Mammary epithelial cell (primary cell): ENCODE measurements at regions of chr11 and their contacts with region 1.

Region 1: GRCh38 chr11:126318574-126319373 is 14.9 kb downstream of the DCPS start:
- DNase-seq: peak; percentile 96
- H3K4me3 ChIP-seq: peak overlapping the region; percentile 2 to 43 (median 26)
- H3K27ac ChIP-seq: peak overlapping the region; percentile 80
- H3K4me1 ChIP-seq: peaks cover 32% of the 10 kb centered on the region
- H3K27me3 ChIP-seq: no peaks in the 10 kb centered on the region
- CTCF ChIP-seq: no peak

Region 2: DNA sequence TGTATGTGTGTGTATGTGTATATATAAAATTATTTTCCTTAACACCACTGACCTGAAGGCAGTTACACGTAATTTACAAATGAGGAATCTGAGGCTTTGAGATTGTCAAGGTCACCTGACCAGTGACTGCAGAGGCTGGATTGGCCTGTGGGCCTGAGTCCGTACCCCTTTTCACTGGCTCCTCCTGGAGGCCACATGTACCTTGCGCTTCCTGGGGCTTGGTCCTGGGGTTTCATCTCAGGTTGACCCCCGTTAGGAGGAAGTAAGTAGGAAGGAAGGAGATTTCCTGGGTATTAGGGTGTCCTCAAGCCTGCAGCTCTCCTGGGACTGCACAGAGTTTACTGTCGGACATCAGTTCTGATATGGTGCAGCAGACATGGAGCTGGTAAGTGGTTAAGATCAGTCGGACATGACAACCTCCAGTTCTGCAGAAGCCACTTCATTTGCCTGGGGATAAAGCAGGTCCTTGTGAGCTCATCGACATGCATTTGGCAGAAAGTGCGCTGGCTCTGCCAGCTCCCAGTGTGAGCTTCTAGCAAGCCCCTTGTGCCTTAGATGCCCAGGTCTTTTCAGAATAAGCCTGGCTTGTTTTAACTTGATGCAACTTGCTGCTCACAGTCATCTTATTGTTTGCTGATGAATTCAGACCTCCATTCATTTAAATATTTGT is 73.3 kb after region 1 on chr11:
- CTCF ChIA-PET with region 1: interaction called, 4 read pairs
- dilution Hi-C with region 1: loop called (anchors 5 kb)
- in situ Hi-C with region 1: no loop called
- intact Hi-C with region 1: loop called (anchors 2 kb)
- DNase-seq: peak; percentile 73
- H3K4me3 ChIP-seq: no peak overlapping the region
- H3K27ac ChIP-seq: no peak overlapping the region
- H3K4me1 ChIP-seq: peaks cover 39% of the 10 kb centered on the region
- H3K27me3 ChIP-seq: no peaks in the 10 kb centered on the region
- CTCF ChIP-seq: no peak

Region 3: GRCh38 chr11:126416542-126417090 is 97.8 kb after region 1 on chr11:
- CTCF ChIA-PET with region 1: no interaction called
- dilution Hi-C with region 1: loop called (anchors 5 kb)
- in situ Hi-C with region 1: loop called in 1 of 2 experiments (anchors 25 kb)
- intact Hi-C with region 1: no loop called
- DNase-seq: no peak
- H3K4me3 ChIP-seq: peak overlapping the region in 1 of 3 experiments; percentile 12
- H3K27ac ChIP-seq: peak overlapping the region; percentile 7
- H3K4me1 ChIP-seq: peaks cover 11% of the 10 kb centered on the region
- H3K27me3 ChIP-seq: no peaks in the 10 kb centered on the region
- CTCF ChIP-seq: no peak

Region 4: DNA sequence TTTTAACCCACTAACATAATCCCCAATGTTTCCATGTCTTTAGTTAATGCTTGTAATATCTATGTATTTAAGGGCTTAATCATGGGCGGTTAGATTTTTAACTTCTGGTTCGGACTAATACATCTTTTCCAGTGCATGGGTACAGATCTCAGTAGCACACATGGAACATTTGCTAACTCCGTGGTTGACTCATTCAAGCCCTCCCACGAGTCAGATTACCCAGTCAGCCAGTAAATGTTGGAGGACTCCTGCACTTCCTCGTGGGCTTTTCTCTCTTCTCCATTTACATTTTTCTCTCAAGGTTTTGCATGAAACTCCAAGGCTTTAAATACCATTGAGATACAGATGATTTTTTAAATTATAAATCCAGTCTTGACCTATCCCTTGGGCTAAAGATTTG is 350.6 kb after region 1 on chr11:
- CTCF ChIA-PET with region 1: no interaction called
- dilution Hi-C with region 1: no loop called
- in situ Hi-C with region 1: no loop called
- intact Hi-C with region 1: no loop called
- DNase-seq: no peak
- H3K4me3 ChIP-seq: no peak overlapping the region
- H3K27ac ChIP-seq: no peak overlapping the region
- H3K4me1 ChIP-seq: no peaks in the 10 kb centered on the region
- H3K27me3 ChIP-seq: peaks cover 5% of the 10 kb centered on the region
- CTCF ChIP-seq: no peak